AG04449 (cell line): ENCODE measurements at regions of chr11 and their contacts with region 1.

Region 1: GRCh38 chr11:131025020-131025419 is 108.7 kb upstream of the SNX19 start:
- DNase-seq: peak; percentile 24
- H3K4me3 ChIP-seq: no peak overlapping the region
- CTCF ChIP-seq: peak; percentile 75

Region 2: GRCh38 chr11:130979386-130979972 is 45.5 kb before region 1 on chr11:
- CTCF ChIA-PET with region 1: no interaction called
- POLR2A ChIA-PET with region 1: no interaction called
- DNase-seq: no peak
- H3K4me3 ChIP-seq: no peak overlapping the region
- CTCF ChIP-seq: peak; percentile 48

Region 3: GRCh38 chr11:131217313-131218310 is 192.6 kb after region 1 on chr11:
- CTCF ChIA-PET with region 1: interaction called, 32 read pairs
- POLR2A ChIA-PET with region 1: no interaction called
- DNase-seq: no peak
- H3K4me3 ChIP-seq: no peak overlapping the region
- CTCF ChIP-seq: peak; percentile 50

Region 4: DNA sequence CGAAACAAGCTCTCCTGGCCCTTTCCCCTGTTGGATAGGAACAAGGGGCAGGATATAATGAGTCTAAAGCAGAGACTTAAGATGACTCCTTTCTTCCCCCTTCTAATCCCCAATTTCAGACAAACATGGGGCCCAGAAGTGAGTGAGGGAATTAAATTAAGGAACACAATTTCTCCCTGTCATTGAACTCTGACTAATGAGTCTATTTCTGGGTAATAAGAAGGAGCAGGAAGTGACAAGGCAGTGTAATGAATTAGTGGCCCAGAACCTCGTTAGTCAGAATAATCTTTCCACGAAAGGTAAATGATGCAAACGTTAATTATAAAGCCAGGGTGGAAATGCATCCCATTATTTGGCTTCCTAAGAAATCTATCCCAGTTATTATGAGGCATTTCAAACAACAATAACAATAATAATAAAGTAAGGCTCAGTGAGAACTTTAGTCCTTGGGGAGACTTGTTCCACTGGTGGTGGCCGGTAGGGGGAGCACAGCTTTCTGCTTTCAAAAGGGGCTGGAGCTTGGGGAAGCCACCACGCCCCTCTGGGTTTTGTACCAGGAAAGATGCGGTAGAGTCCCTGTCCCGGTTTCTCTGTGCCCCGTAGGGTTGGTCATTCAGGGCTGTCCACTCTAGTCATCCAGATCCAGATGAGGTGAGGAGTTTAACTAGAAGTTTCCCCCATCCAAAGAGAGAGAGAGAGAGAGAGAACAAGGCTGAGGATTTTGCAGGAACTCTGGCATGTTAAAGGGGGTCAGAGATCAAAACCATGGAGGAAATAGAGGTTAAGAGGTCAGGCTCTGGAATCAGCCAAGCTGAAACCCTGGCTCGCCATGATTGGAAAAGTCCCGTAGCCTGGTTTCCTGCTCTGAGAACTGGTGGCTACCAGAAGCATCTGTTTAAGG is 643.7 kb after region 1 on chr11:
- CTCF ChIA-PET with region 1: interaction called, 58 read pairs
- POLR2A ChIA-PET with region 1: no interaction called
- DNase-seq: no peak
- H3K4me3 ChIP-seq: no peak overlapping the region
- CTCF ChIP-seq: peak; percentile 58